Naive thymus-derived CD4-positive, alpha-beta T cell (primary cell): ENCODE measurements at regions of chr2 and their contacts with region 1.

Region 1: GRCh38 chr2:172555522-172556283 is at the start of gene PDK1:
- DNase-seq: peak; percentile 89 to 95 (median 94)
- ATAC-seq: peak; percentile 97
- H3K4me3 ChIP-seq: peak within 1 kb of the TSS; percentile 84
- H3K4me3 Mint-ChIP-seq: peak within 1 kb of the TSS; percentile 88 to 99 (median 93)
- H3K27ac ChIP-seq: peak within 1 kb of the TSS; percentile 98
- H3K27ac Mint-ChIP-seq: peak within 1 kb of the TSS; percentile 86 to 97 (median 95)
- H3K4me1 ChIP-seq: peaks cover 10 to 29% of the 10 kb centered on the region in 2 donors
- H3K4me1 Mint-ChIP-seq: peaks cover 37 to 72% (median 64%) of the 10 kb centered on the region in 7 donors
- H3K27me3 ChIP-seq: no peaks in the 10 kb centered on the region
- H3K27me3 Mint-ChIP-seq: peaks cover 0 to 5% (median 0%) of the 10 kb centered on the region in 5 donors
- total RNA-seq, gene PDK1: 56.0 to 70.6 (median 66.6) TPM

Region 2: DNA sequence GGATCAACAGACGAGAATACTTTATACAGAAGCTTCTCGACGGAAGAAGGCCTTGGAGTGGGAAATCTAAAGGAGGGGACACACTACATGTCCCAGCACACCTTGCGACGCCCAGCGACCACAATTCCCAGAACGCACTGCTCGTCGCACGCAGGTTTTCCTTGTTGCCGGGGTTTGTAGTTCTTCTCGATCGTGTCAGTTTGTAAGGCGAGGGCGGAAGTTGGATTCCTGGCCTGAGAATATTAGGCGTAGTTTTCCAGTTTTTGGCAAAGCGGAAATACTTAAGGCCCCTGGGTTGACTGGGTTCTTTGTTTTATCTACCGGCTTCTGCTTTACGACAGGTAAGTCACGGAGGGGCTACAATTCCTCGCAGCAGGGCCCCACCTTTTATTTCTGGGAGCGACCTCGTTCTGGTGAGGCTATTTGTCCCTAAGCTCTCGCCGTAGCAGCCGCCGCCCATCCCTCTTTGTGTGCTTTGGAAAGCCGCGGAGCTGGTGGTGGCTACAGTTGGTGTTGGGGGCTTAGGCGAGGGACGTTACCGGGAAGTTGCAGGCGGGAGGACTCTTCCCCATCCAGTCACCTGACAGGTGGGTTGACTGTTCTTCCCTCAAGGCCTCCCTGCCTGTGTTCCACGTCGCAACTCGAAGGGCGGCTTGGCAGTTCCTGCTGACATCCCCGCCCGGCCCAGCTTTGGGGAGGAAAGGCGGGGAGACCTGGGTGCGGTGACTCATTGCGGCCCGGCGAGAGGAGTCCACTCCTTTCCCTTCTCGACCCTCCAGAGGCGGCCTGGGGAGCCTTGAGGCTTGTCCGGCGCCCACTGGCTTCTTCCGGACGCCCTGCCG is 868.2 kb before region 1 on chr2 and contains the start of gene DYNC1I2:
- CTCF ChIA-PET with region 1: no interaction called
- POLR2A ChIA-PET with region 1: no interaction called
- intact Hi-C with region 1: loop called (anchors 1 kb)
- DNase-seq: peak; percentile 38 to 82 (median 79)
- ATAC-seq: peak; percentile 90
- H3K4me3 ChIP-seq: peak within 1 kb of the TSS; percentile 96
- H3K4me3 Mint-ChIP-seq: peak within 1 kb of the TSS; percentile 89 to 98 (median 93)
- H3K27ac ChIP-seq: peak within 1 kb of the TSS; percentile 67
- H3K27ac Mint-ChIP-seq: peak within 1 kb of the TSS; percentile 77 to 95 (median 85)
- H3K4me1 ChIP-seq: peaks cover 7 to 10% of the 10 kb centered on the region in 2 donors
- H3K4me1 Mint-ChIP-seq: peaks cover 11 to 43% (median 24%) of the 10 kb centered on the region in 7 donors
- H3K27me3 ChIP-seq: no peaks in the 10 kb centered on the region
- H3K27me3 Mint-ChIP-seq: peaks cover 0 to 21% (median 0%) of the 10 kb centered on the region in 5 donors
- total RNA-seq, gene DYNC1I2: 21.5 to 57.0 (median 41.7) TPM

Region 3: DNA sequence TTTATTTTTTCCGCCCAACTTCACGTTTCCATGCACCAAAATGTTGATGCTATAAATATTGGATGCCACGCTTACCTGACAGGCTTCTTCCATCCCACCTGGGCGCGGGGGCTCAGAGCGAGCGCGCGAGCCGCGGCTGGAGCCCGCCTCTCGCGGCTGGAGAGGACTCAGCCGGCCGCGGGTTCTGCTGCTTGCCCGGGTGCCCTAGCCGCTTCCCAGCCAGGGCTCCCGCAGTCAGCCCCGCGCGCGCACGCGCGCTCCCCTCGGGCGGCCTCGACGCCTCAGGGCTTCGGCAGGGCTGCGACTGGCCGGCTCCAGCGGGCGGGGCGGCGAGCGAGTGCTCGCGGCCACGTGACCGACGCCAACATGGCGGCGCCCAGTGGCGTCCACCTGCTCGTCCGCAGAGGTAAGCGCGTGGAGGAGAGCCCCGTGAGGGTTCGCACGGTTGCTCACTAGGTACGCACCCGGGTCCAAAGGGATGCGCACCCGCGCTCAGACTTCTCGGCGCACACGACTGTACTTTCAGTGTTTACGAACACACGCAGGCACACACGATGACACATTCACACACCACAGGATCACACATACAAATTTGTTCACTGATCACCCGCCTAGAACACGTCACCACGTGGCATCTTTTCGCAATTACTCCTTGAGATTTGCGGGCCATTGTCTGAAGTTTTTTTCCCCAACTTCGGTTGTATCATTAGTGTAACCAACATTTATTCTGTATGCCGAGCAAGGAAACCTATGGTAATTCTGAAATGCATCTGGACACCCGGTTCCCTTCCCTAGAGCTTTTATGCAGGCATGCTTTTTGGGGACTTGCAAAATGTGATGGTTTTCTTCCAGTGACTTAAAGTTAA is 555.9 kb before region 1 on chr2 and contains the start of gene METAP1D:
- CTCF ChIA-PET with region 1: no interaction called
- POLR2A ChIA-PET with region 1: no interaction called
- intact Hi-C with region 1: loop called (anchors 2 kb)
- DNase-seq: peak; percentile 74 to 92 (median 82)
- ATAC-seq: peak; percentile 98
- H3K4me3 ChIP-seq: peak within 1 kb of the TSS; percentile 99
- H3K4me3 Mint-ChIP-seq: peak within 1 kb of the TSS; percentile 87 to 99 (median 96)
- H3K27ac ChIP-seq: peak within 1 kb of the TSS; percentile 61
- H3K27ac Mint-ChIP-seq: peak within 1 kb of the TSS; percentile 77 to 97 (median 93)
- H3K4me1 ChIP-seq: peaks cover 0 to 5% of the 10 kb centered on the region in 2 donors
- H3K4me1 Mint-ChIP-seq: peaks cover 5 to 24% (median 22%) of the 10 kb centered on the region in 7 donors
- H3K27me3 ChIP-seq: no peaks in the 10 kb centered on the region
- H3K27me3 Mint-ChIP-seq: peaks cover 6 to 23% (median 9%) of the 10 kb centered on the region in 5 donors
- total RNA-seq, gene METAP1D: 5.3 to 12.2 (median 11.6) TPM

Region 4: GRCh38 chr2:172484253-172484652 is 71.5 kb before region 1 on chr2:
- CTCF ChIA-PET with region 1: interaction called, 6 read pairs
- POLR2A ChIA-PET with region 1: interaction called, 25 read pairs
- intact Hi-C with region 1: loop called in 1 of 2 experiments (anchors 1 kb)
- DNase-seq: peak in 7 of 9 donors; percentile 46 to 68 (median 61)
- ATAC-seq: peak; percentile 66
- H3K4me3 ChIP-seq: no peak overlapping the region
- H3K4me3 Mint-ChIP-seq: peak overlapping the region in 8 of 10 donors; percentile 1 to 81 (median 41)
- H3K27ac ChIP-seq: peak overlapping the region; percentile 16
- H3K27ac Mint-ChIP-seq: peak overlapping the region in 8 of 9 donors; percentile 76 to 94 (median 84)
- H3K4me1 ChIP-seq: peaks cover 0 to 58% of the 10 kb centered on the region in 2 donors
- H3K4me1 Mint-ChIP-seq: peaks cover 27 to 92% (median 77%) of the 10 kb centered on the region in 7 donors
- H3K27me3 ChIP-seq: no peaks in the 10 kb centered on the region
- H3K27me3 Mint-ChIP-seq: no peaks in the 10 kb centered on the region

Region 5: DNA sequence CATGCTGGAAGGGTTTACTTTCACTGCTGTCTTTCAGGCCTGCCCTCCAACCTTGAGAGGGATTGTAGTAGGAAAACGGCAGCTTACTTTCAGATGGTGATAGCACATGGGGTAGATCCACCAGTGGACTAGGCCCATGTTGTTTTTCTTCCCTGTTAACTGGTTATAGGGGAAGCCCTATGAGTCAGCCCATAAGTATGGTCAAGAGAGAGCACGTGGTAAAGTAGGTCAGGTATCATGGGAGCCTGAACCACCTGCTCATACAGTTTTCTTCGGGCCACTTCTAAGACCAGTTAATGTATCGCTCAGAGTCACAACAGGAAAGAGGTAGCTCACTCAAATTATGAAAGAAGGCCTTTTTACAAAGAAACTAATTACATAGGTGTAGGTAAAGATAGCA is 33.2 kb after region 1 on chr2:
- CTCF ChIA-PET with region 1: interaction called, 3 read pairs
- POLR2A ChIA-PET with region 1: no interaction called
- intact Hi-C with region 1: loop called in 1 of 2 experiments (anchors 5 kb)
- DNase-seq: no peak
- ATAC-seq: no peak
- H3K4me3 ChIP-seq: no peak overlapping the region
- H3K4me3 Mint-ChIP-seq: peak overlapping the region in 1 of 10 donors; percentile 2
- H3K27ac ChIP-seq: peak overlapping the region; percentile 7
- H3K27ac Mint-ChIP-seq: peak overlapping the region in 7 of 9 donors; percentile 7 to 76 (median 48)
- H3K4me1 ChIP-seq: peaks cover 5 to 9% of the 10 kb centered on the region in 2 donors
- H3K4me1 Mint-ChIP-seq: peaks cover 27 to 66% (median 57%) of the 10 kb centered on the region in 7 donors
- H3K27me3 ChIP-seq: no peaks in the 10 kb centered on the region
- H3K27me3 Mint-ChIP-seq: no peaks in the 10 kb centered on the region

Region 6: GRCh38 chr2:172968061-172968469 is 412.4 kb after region 1 on chr2:
- CTCF ChIA-PET with region 1: no interaction called
- POLR2A ChIA-PET with region 1: no interaction called
- intact Hi-C with region 1: no loop called
- DNase-seq: no peak
- ATAC-seq: no peak
- H3K4me3 ChIP-seq: no peak overlapping the region
- H3K4me3 Mint-ChIP-seq: no peak overlapping the region
- H3K27ac ChIP-seq: no peak overlapping the region
- H3K27ac Mint-ChIP-seq: peak overlapping the region in 5 of 9 donors; percentile 7 to 53 (median 26)
- H3K4me1 ChIP-seq: no peaks in the 10 kb centered on the region
- H3K4me1 Mint-ChIP-seq: peaks cover 5 to 34% (median 21%) of the 10 kb centered on the region in 7 donors
- H3K27me3 ChIP-seq: no peaks in the 10 kb centered on the region
- H3K27me3 Mint-ChIP-seq: peaks cover 0 to 4% (median under 1%) of the 10 kb centered on the region in 5 donors

Region 7: GRCh38 chr2:174248187-174248997 is 1692.7 kb after region 1 on chr2 and contains the start of gene OLA1:
- CTCF ChIA-PET with region 1: no interaction called
- POLR2A ChIA-PET with region 1: no interaction called
- intact Hi-C with region 1: loop called in 1 of 2 experiments (anchors 1 kb)
- DNase-seq: peak; percentile 91 to 99 (median 95)
- ATAC-seq: peak; percentile 99
- H3K4me3 ChIP-seq: peak within 1 kb of the TSS; percentile 90
- H3K4me3 Mint-ChIP-seq: peak within 1 kb of the TSS; percentile 71 to 88 (median 86)
- H3K27ac ChIP-seq: peak within 1 kb of the TSS; percentile 82
- H3K27ac Mint-ChIP-seq: peak within 1 kb of the TSS; percentile 67 to 91 (median 79)
- H3K4me1 ChIP-seq: peaks cover 6 to 12% of the 10 kb centered on the region in 2 donors
- H3K4me1 Mint-ChIP-seq: peaks cover 18 to 32% (median 25%) of the 10 kb centered on the region in 7 donors
- H3K27me3 ChIP-seq: no peaks in the 10 kb centered on the region
- H3K27me3 Mint-ChIP-seq: peaks cover 0 to 5% (median 0%) of the 10 kb centered on the region in 5 donors
- total RNA-seq, gene OLA1: 34.4 to 84.7 (median 40.3) TPM